Activated CD4-positive, alpha-beta memory T cell treated with anti-CD3 and anti-CD28 coated beads for 36 hours (primary cell): ENCODE measurements at regions of chr14 and their contacts with region 1.

Region 1: DNA sequence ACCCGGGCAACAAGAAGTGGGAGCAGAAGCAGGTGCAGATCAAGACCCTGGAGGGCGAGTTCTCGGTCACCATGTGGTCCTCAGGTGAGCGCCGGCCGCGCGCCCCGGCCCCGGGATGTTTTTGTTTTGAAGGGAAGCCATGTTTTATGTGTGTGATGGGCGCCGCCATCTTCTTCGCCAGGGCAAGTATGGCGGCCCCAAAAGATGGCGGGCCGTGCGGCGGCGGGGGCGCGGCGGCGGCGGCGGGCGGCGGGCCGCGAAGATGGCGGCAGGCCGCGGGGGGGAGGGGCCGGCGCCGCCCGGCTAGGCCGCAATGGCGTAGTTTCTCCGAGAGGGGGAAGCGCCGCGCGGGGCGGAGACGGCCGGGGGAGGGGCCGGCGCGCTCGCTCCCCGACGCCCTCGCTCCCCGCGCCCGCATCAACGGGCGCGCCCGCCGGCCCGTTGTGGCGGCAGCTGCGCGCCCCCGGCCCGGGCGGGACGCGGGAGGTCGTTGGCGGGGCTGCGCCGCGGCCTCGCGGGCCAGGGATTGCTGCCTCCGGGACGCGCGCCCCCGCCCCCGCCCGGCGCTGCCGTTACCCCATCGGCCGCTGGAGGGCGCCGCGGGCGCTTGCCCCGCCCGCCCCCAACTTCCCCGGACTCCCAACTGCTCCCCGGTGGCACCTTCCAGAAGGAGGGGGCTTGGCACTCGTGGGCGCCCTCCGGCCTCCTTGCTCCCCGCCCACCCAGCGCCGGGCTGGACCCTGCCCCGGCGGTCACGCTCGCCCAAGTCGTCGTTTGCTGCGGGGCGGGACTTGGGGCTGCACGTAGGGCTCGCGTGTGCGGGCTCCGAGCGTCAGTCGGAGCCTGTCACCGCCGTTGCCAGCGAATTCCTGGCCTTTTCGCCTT is 1.1 kb downstream of the YY1 start:
- DNase-seq: peak; percentile 90
- H3K4me3 Mint-ChIP-seq: peak overlapping the region; percentile 81
- H3K27ac Mint-ChIP-seq: peak overlapping the region; percentile 89
- H3K4me1 Mint-ChIP-seq: peaks cover 54% of the 10 kb centered on the region
- H3K27me3 Mint-ChIP-seq: peaks cover 2% of the 10 kb centered on the region

Region 2: GRCh38 chr14:100221533-100222223 is 18.4 kb before region 1 on chr14:
- CTCF ChIA-PET with region 1: interaction called, 19 read pairs
- POLR2A ChIA-PET with region 1: interaction called, 64 read pairs
- intact Hi-C with region 1: loop called (anchors 1 kb)
- DNase-seq: peak; percentile 82
- H3K4me3 Mint-ChIP-seq: no peak overlapping the region
- H3K27ac Mint-ChIP-seq: no peak overlapping the region
- H3K4me1 Mint-ChIP-seq: peaks cover 4% of the 10 kb centered on the region
- H3K27me3 Mint-ChIP-seq: no peaks in the 10 kb centered on the region

Region 3: GRCh38 chr14:100256339-100256895 is 16.3 kb after region 1 on chr14:
- CTCF ChIA-PET with region 1: interaction called, 10 read pairs
- POLR2A ChIA-PET with region 1: interaction called, 5 read pairs
- intact Hi-C with region 1: loop called (anchors 2 kb)
- DNase-seq: no peak
- H3K4me3 Mint-ChIP-seq: no peak overlapping the region
- H3K27ac Mint-ChIP-seq: no peak overlapping the region
- H3K4me1 Mint-ChIP-seq: peaks cover 82% of the 10 kb centered on the region
- H3K27me3 Mint-ChIP-seq: no peaks in the 10 kb centered on the region

Region 4: GRCh38 chr14:100263144-100263543 is 23.1 kb after region 1 on chr14:
- CTCF ChIA-PET with region 1: interaction called, 10 read pairs
- POLR2A ChIA-PET with region 1: interaction called, 5 read pairs
- intact Hi-C with region 1: loop called (anchors 2 kb)
- DNase-seq: no peak
- H3K4me3 Mint-ChIP-seq: no peak overlapping the region
- H3K27ac Mint-ChIP-seq: peak overlapping the region; percentile 51
- H3K4me1 Mint-ChIP-seq: peaks cover 80% of the 10 kb centered on the region
- H3K27me3 Mint-ChIP-seq: no peaks in the 10 kb centered on the region

Region 5: GRCh38 chr14:100278702-100279101 is 38.6 kb after region 1 on chr14:
- CTCF ChIA-PET with region 1: interaction called, 13 read pairs
- POLR2A ChIA-PET with region 1: no interaction called
- intact Hi-C with region 1: loop called (anchors 5 kb)
- DNase-seq: no peak
- H3K4me3 Mint-ChIP-seq: no peak overlapping the region
- H3K27ac Mint-ChIP-seq: peak overlapping the region; percentile 4
- H3K4me1 Mint-ChIP-seq: peaks cover 43% of the 10 kb centered on the region
- H3K27me3 Mint-ChIP-seq: no peaks in the 10 kb centered on the region

Region 6: DNA sequence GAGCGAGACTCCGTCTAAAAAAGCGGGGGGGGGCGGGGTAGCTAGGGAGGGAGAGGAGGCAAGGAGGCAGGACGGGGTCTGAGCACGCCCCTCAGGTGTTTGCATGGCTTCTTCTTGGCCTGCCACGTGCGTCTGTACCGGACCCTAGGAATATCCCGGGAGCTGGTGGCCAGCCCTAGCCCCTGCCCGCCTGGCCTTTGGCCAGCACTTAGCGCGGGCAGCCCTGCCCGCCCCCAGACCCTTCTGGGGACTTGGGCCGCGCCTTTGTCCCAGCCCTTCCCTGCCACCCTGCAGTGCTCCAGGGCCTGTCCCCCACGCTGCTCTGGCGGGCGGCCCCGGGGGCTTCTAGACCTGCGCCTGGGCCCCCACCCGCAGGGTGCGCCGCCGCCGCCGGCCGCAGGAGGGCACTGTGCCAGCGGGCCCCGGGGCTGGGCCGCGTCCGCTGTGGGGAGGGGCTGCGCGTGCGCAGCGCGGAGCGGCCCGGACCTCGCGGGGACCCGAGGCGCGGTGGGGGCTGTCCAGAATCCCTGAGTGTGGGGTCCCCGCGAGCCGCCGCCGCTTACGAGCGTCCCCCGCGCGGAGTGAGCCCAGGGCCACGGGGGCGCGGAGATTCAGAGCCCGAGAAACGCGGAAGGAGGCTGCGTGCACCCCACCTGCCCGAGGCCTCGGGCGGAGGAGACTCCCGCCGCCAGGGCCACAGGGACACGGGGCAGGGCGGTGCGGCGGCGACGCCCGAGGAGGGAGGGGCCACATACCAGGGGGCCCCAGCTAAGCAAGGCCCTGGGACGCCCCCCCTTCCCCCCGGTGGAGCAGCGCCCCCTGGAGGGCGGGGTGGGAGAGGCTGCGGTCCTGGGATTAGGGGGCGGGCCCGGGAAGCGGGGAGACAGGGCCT is 45.2 kb after region 1 on chr14:
- CTCF ChIA-PET with region 1: interaction called, 19 read pairs
- POLR2A ChIA-PET with region 1: interaction called, 4 read pairs
- intact Hi-C with region 1: no loop called
- DNase-seq: peak; percentile 83
- H3K4me3 Mint-ChIP-seq: peak overlapping the region; percentile 69
- H3K27ac Mint-ChIP-seq: no peak overlapping the region
- H3K4me1 Mint-ChIP-seq: peaks cover 6% of the 10 kb centered on the region
- H3K27me3 Mint-ChIP-seq: no peaks in the 10 kb centered on the region